ENCODE measurements at regions of chr12 and their contacts with region 1.

Region 1: DNA sequence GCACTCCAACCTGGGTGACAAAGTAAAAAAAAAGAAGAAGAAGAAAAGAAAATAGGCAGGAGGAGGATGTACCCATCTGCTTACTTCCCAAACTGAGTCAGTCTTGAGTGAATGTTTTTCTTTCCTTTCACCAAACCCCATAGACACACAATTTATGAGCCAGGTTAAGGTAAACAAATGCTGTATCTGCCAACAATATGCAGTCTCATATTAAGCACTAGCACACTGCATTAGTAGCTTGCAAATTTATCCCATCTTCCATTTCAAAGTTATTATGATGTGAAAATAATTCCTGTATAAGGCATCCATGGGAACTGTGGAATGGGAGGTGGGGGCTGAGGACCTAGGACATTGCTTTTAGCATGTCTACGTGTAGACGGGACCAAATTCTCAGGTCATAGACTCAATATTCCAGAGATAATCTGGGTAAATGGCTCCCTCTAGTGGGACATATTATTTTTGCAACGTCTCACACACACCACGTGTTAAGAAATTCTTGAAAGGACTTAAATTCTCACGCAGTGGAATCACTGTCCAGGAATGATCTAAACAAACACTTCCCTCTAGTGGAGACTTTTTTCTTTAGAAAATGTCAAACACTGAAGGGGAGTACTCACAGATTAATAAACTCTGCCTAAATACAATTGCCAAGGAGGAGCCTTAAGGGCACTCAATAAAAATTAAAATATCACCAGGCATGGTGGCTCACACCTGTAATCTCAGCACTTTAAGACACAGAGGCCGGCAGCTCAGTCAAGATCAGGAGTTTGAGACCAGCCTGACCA is 17.1 kb upstream of the OR10P1 start:
- DNase-seq: peak; percentile 24 to 70 (median 61)
- H3K4me3 ChIP-seq: no peak overlapping the region
- H3K27ac ChIP-seq: no peak overlapping the region
- H3K4me1 ChIP-seq: no peaks in the 10 kb centered on the region
- H3K27me3 ChIP-seq: no peaks in the 10 kb centered on the region
- CTCF ChIP-seq: peak; percentile 79 to 94 (median 92)
- POLR2A ChIP-seq: no peak

Region 2: GRCh38 chr12:55194382-55194781 is 425.2 kb before region 1 on chr12:
- intact Hi-C with region 1: loop called (anchors 5 to 10 kb)
- DNase-seq: no peak
- H3K4me3 ChIP-seq: no peak overlapping the region
- H3K27ac ChIP-seq: no peak overlapping the region
- H3K4me1 ChIP-seq: no peaks in the 10 kb centered on the region
- H3K27me3 ChIP-seq: peaks cover 6% of the 10 kb centered on the region
- CTCF ChIP-seq: no peak
- POLR2A ChIP-seq: no peak

Region 3: DNA sequence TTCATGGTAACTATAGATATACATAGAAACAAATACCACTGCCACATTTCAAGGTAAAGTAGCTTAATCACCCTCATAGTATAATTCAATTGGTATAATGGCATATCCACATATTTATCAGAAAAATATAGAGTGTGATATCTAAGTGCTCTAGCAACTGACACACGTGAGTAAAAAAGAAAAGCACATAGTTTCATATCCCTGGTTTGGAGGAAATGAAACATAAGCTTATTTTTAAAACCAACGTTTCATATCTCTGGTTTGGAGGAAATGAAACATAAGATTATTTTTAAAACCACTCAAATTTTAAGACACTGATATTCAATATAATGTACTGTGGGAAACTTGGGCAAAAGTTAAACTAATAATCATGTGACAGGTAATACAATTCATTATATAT is 151.7 kb before region 1 on chr12:
- intact Hi-C with region 1: no loop called
- DNase-seq: no peak
- H3K4me3 ChIP-seq: no peak overlapping the region
- H3K27ac ChIP-seq: no peak overlapping the region
- H3K4me1 ChIP-seq: no peaks in the 10 kb centered on the region
- H3K27me3 ChIP-seq: no peaks in the 10 kb centered on the region
- CTCF ChIP-seq: no peak
- POLR2A ChIP-seq: no peak

Region 4: DNA sequence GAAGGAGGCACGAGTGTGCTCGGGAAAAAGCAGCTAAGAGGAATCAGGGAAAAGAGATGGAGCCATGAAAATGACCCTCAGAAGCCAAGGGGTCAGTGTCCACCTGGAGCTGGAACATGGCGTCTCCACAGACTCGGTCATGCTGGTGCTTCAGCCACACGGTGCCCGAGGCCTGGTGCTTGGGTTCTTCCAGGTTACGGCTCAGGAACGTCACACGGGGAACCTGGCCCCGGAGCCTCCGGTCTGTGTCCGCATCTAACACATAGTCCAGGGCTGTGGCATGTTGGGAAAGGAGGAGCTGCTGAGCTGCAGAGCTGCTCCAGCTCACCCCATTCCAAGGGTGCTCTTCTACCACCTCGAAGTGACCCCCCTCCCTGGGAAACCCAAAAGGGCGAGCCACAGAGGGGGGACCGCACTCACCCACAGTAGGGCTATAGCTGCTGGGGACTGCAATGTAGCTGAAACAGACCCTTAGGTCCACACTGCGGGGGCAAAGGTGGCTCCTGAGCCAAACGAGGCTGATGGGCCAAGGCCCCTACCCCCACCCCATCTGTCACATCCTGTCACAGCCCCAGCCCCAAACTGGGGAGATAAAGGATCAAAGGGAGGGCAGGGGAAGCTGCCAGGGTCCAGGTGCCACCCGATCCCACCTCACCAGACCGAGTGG is 77.4 kb after region 1 on chr12:
- intact Hi-C with region 1: no loop called
- DNase-seq: peak in 1 of 7 donors; percentile 9
- H3K4me3 ChIP-seq: no peak overlapping the region
- H3K27ac ChIP-seq: no peak overlapping the region
- H3K4me1 ChIP-seq: no peaks in the 10 kb centered on the region
- H3K27me3 ChIP-seq: no peaks in the 10 kb centered on the region
- CTCF ChIP-seq: no peak
- POLR2A ChIP-seq: no peak

Region 5: GRCh38 chr12:55715833-55716581 is 96.5 kb after region 1 on chr12 and contains the start of gene BLOC1S1:
- intact Hi-C with region 1: no loop called
- DNase-seq: peak; percentile 94 to 97 (median 95)
- H3K4me3 ChIP-seq: peak within 1 kb of the TSS; percentile 27 to 70 (median 64)
- H3K27ac ChIP-seq: peak within 1 kb of the TSS; percentile 57 to 96 (median 91)
- H3K4me1 ChIP-seq: peaks cover 13 to 31% of the 10 kb centered on the region in 2 donors
- H3K27me3 ChIP-seq: no peaks in the 10 kb centered on the region
- CTCF ChIP-seq: peak in 3 of 6 experiments; percentile 8 to 19 (median 10)
- POLR2A ChIP-seq: peak in 1 of 2 donors; percentile 59
- total RNA-seq, gene BLOC1S1: 180 to 304 (median 220) TPM

Measured in adrenal gland (tissue), 19 donors.